ENCODE measurements at regions of chr10 and their contacts with region 1.

Region 1: GRCh38 chr10:13299437-13300287 is at the start of gene PHYH:
- DNase-seq: peak; percentile 79
- H3K4me3 Mint-ChIP-seq: peak within 1 kb of the TSS; percentile 83
- H3K27ac Mint-ChIP-seq: peak within 1 kb of the TSS; percentile 85
- H3K4me1 Mint-ChIP-seq: peaks cover 14% of the 10 kb centered on the region
- H3K27me3 Mint-ChIP-seq: no peaks in the 10 kb centered on the region
- total RNA-seq, gene PHYH: 18.0 and 20.0 TPM in 2 replicates

Region 2: DNA sequence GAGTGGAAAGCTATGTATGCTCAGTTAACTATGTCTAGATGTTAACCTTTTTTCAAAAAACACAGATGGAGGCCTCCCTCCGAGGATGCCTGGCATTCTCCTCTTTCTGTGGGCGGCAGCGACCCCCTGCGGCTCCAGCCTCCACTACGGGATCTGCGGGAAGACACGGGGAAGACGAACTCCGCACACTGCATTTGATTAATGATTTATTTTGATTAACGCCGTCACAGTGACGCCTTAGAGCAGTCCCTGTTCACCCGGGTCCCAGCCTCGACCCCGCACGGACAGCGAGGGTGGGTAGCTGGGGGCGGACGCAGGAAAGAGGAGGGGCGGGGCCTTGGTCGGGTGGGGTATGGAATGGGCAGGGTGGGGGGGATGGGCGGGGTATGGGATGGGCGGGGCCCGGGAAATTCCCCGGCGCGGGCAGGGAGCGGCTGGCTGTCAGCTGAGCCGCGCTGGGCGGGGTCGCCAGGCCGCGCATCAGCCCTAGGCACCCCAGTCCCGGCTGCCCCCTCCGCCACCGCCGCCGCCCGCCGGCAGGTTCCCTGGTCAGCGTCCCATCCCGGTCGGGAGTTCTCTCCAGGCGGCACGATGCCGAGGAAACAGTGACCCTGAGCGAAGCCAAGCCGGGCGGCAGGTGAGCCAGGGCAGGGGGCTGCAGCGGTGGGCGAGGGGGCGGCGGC is 199.9 kb before region 1 on chr10 and contains the start of gene OPTN:
- intact Hi-C with region 1: loop called (anchors 5 kb)
- DNase-seq: peak; percentile 71
- H3K4me3 Mint-ChIP-seq: peak within 1 kb of the TSS; percentile 88
- H3K27ac Mint-ChIP-seq: peak within 1 kb of the TSS; percentile 86
- H3K4me1 Mint-ChIP-seq: peaks cover 44% of the 10 kb centered on the region
- H3K27me3 Mint-ChIP-seq: no peaks in the 10 kb centered on the region
- total RNA-seq, gene OPTN: 49.0 and 53.2 TPM in 2 replicates

Region 3: DNA sequence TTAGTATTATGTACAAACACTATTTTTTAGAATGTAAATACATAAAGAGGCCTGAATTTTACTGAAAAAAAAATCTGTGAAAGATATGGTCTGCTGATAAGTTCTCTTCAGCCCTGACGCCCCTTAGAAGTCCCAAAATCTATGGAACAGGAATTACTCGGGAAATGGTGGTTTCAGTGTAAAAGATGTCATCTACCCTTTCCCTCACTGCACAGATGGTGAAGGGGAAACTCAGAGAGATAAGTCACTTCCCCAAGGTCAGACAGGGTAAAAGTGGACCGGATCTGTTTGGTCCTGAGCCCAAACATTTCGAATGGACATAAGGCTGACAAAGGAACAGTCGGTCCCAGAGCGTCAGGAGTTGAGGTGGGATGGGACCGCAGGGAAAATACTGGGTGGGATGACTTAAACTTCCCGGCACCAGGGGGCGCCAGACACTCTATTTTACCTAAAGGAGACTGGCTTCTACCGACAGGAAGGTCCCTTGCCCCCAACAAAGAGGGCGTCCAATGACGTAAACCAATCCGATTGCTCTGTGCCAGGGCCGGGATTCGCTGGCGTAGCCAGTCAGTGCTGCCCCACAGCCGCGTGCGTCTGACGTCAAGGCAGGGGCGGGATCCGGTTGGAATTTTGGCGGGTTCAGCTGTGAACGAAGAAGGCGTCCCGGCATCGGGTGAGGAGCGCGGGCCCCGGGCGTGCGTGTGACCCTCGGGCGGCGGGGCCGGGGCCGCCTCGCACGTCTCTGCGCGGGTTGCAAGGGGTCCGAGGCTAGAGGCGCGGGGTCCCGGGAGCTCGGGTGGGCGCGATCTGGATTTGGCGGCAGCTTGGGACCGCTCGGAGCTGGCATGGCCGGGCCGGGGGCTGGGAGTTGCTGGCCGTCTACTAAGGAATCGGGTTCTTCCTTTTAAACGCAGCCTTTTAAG is 138.5 kb before region 1 on chr10 and contains the start of gene MCM10:
- intact Hi-C with region 1: loop called (anchors 1 kb)
- DNase-seq: peak; percentile 98
- H3K4me3 Mint-ChIP-seq: peak within 1 kb of the TSS; percentile 85
- H3K27ac Mint-ChIP-seq: peak within 1 kb of the TSS; percentile 89
- H3K4me1 Mint-ChIP-seq: peaks cover 43% of the 10 kb centered on the region
- H3K27me3 Mint-ChIP-seq: no peaks in the 10 kb centered on the region
- total RNA-seq, gene MCM10: 73.3 and 78.5 TPM in 2 replicates

Region 4: GRCh38 chr10:13317474-13317873 is 17.8 kb after region 1 on chr10:
- intact Hi-C with region 1: no loop called
- DNase-seq: no peak
- H3K4me3 Mint-ChIP-seq: no peak overlapping the region
- H3K27ac Mint-ChIP-seq: no peak overlapping the region
- H3K4me1 Mint-ChIP-seq: no peaks in the 10 kb centered on the region
- H3K27me3 Mint-ChIP-seq: no peaks in the 10 kb centered on the region

Region 5: DNA sequence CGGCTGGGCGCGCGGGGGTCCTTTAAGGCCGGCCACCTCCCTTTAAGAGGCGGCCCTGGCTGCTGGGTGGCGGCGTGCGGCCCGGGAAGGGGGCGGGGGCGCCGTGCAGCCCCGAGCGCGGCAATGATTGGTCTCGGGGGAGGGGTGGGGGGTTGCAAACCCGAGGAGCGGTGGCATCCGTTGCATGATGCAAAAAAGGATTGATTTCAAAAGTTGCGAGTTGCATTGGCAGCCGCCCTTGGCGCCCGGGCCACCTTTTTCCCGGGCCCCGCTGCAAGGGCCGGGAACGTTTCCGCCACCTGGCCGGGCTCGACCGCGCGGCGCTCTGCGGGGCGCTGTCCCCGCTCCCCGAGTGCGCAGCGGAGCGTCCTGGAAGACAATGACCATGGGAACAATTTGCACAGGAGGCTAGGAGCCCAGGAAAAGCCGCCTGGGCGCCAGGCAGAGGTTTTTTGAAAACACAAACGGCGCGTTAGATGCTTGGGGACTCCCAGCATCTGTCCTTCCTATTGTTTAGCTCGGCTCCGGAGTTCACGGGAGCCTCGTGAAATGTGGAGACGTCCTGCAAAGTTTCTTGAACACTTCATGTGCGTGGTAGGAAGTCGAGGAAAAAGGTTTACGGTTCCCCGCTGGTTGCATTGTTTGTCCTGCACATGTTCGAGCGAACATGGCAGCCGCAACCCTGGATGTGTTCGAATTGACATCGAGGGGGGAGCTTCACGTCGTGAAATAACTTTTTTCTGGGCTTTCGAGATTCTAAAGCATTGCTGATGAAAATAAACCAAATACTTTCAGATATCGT is 48.8 kb after region 1 on chr10 and contains the start of gene SEPHS1:
- intact Hi-C with region 1: loop called (anchors 1 kb)
- DNase-seq: peak; percentile 79
- H3K4me3 Mint-ChIP-seq: peak within 1 kb of the TSS; percentile 90
- H3K27ac Mint-ChIP-seq: peak within 1 kb of the TSS; percentile 90
- H3K4me1 Mint-ChIP-seq: peaks cover 48% of the 10 kb centered on the region
- H3K27me3 Mint-ChIP-seq: peaks cover 5% of the 10 kb centered on the region
- total RNA-seq, gene SEPHS1: 58.8 and 61.9 TPM in 2 replicates

Region 6: GRCh38 chr10:13399236-13399635 is 99.6 kb after region 1 on chr10:
- intact Hi-C with region 1: no loop called
- DNase-seq: no peak
- H3K4me3 Mint-ChIP-seq: no peak overlapping the region
- H3K27ac Mint-ChIP-seq: no peak overlapping the region
- H3K4me1 Mint-ChIP-seq: no peaks in the 10 kb centered on the region
- H3K27me3 Mint-ChIP-seq: no peaks in the 10 kb centered on the region

Region 7: GRCh38 chr10:13440185-13441061 is 140.8 kb after region 1 on chr10:
- intact Hi-C with region 1: loop called (anchors 1 kb)
- DNase-seq: peak; percentile 49
- H3K4me3 Mint-ChIP-seq: peak overlapping the region; percentile 4
- H3K27ac Mint-ChIP-seq: no peak overlapping the region
- H3K4me1 Mint-ChIP-seq: peaks cover 10% of the 10 kb centered on the region
- H3K27me3 Mint-ChIP-seq: peaks cover 41% of the 10 kb centered on the region

Measured in activated T-helper 2 cell treated with anti-CD3 and anti-CD28 coated beads, Interferon-gamma antibody, Interleukin-2, Interleukin-4, amounts not matched to agents 10 μg/mL and 5 μg/mL and 100 μg/mL, durations not matched to agents 14 hours and 24 hours and 36 hours (primary cell).